ENCODE measurements at regions of chr1 and their contacts with region 1.

Region 1: GRCh38 chr1:97820470-97821188 is 100.2 kb downstream of the DPYD start:
- DNase-seq: peak; percentile 43
- H3K4me3 Mint-ChIP-seq: no peak overlapping the region
- H3K27ac Mint-ChIP-seq: no peak overlapping the region
- H3K4me1 Mint-ChIP-seq: no peaks in the 10 kb centered on the region
- H3K27me3 Mint-ChIP-seq: no peaks in the 10 kb centered on the region
- CTCF ChIP-seq: peak; percentile 45

Region 2: GRCh38 chr1:96966536-96967138 is 854.0 kb before region 1 on chr1:
- CTCF ChIA-PET with region 1: interaction called, 5 read pairs
- POLR2A ChIA-PET with region 1: no interaction called
- intact Hi-C with region 1: loop called (anchors 1 kb)
- DNase-seq: peak; percentile 70
- H3K4me3 Mint-ChIP-seq: peak overlapping the region; percentile 4
- H3K27ac Mint-ChIP-seq: no peak overlapping the region
- H3K4me1 Mint-ChIP-seq: peaks cover 6% of the 10 kb centered on the region
- H3K27me3 Mint-ChIP-seq: no peaks in the 10 kb centered on the region
- CTCF ChIP-seq: peak; percentile 90

Region 3: GRCh38 chr1:97137862-97138514 is 682.6 kb before region 1 on chr1:
- CTCF ChIA-PET with region 1: interaction called, 7 read pairs
- POLR2A ChIA-PET with region 1: no interaction called
- intact Hi-C with region 1: loop called (anchors 1 kb)
- DNase-seq: peak; percentile 67
- H3K4me3 Mint-ChIP-seq: no peak overlapping the region
- H3K27ac Mint-ChIP-seq: no peak overlapping the region
- H3K4me1 Mint-ChIP-seq: peaks cover 24% of the 10 kb centered on the region
- H3K27me3 Mint-ChIP-seq: no peaks in the 10 kb centered on the region
- CTCF ChIP-seq: peak; percentile 64

Region 4: DNA sequence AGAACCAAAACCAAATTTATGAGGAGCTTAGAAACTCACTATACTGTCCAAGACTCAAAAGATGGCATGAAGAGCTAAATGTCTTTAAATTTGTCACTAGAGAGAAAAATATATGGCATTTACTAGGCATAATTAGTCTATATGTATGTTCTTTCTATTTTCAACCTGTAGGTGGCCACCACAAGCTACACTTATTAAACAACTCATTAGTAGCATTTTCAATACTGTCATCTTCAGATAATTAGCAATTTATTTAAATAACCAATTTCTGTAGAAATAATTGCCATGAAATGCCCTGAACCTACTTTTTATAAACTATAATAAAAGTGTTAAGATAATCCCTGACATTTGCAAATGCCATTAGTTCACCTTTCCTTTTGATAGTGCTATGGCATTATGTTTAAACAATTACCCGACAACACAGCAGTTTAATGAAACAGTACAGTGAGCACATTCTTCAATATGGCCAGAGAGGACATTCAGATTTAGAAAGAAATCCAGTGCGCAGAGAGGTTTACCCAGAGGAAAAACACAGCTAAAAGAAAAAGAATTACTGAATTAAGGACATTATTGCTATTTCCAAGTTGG is 576.6 kb before region 1 on chr1:
- CTCF ChIA-PET with region 1: interaction called, 3 read pairs
- POLR2A ChIA-PET with region 1: no interaction called
- intact Hi-C with region 1: loop called (anchors 1 kb)
- DNase-seq: peak; percentile 35
- H3K4me3 Mint-ChIP-seq: no peak overlapping the region
- H3K27ac Mint-ChIP-seq: peak overlapping the region; percentile 53
- H3K4me1 Mint-ChIP-seq: peaks cover 5% of the 10 kb centered on the region
- H3K27me3 Mint-ChIP-seq: no peaks in the 10 kb centered on the region
- CTCF ChIP-seq: peak; percentile 51

Region 5: DNA sequence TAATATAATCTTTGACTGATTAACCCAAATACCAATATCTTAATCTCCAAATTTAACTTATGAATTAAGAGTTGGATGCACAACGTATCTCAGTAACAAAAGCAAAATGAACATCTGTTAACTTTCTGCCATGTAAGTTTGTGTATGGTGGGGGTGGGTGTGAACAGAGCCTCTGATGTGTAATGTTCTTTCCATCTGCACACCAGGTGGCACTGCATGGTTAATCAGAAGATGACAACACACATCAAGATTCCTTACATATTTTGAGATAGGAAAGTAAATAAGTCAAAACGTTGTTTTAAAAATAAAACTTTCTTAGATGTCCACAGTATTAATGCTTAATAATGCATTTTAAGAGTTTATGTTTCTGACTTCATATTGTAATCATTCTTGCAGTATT is 151.7 kb before region 1 on chr1:
- CTCF ChIA-PET with region 1: interaction called, 3 read pairs
- POLR2A ChIA-PET with region 1: no interaction called
- intact Hi-C with region 1: loop called (anchors 2 kb)
- DNase-seq: peak; percentile 47
- H3K4me3 Mint-ChIP-seq: no peak overlapping the region
- H3K27ac Mint-ChIP-seq: no peak overlapping the region
- H3K4me1 Mint-ChIP-seq: no peaks in the 10 kb centered on the region
- H3K27me3 Mint-ChIP-seq: no peaks in the 10 kb centered on the region
- CTCF ChIP-seq: peak; percentile 34

Region 6: GRCh38 chr1:98008373-98008772 is 187.7 kb after region 1 on chr1:
- CTCF ChIA-PET with region 1: no interaction called
- POLR2A ChIA-PET with region 1: no interaction called
- intact Hi-C with region 1: no loop called
- DNase-seq: no peak
- H3K4me3 Mint-ChIP-seq: no peak overlapping the region
- H3K27ac Mint-ChIP-seq: no peak overlapping the region
- H3K4me1 Mint-ChIP-seq: no peaks in the 10 kb centered on the region
- H3K27me3 Mint-ChIP-seq: no peaks in the 10 kb centered on the region
- CTCF ChIP-seq: no peak

Region 7: DNA sequence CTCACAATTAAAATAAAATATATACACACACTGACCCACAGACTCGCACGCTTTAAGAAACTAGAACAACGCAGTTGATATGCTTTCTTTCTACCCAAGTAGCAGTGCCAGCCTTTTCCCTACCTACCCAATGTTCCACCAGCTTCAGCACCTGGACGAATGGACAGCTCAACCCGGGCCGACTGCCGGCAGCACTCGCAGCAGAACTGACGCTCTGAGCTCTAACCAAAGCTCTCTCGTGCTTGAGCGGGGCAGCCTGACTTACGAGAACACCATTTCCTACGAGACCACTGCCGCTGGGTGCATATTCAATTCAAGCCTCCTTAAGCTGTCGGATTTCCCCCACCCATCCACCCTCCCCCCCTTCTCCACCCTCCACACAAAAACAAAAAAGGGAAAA is 227.6 kb after region 1 on chr1:
- CTCF ChIA-PET with region 1: interaction called, 4 read pairs
- POLR2A ChIA-PET with region 1: no interaction called
- intact Hi-C with region 1: loop called (anchors 5 kb)
- DNase-seq: peak; percentile 78
- H3K4me3 Mint-ChIP-seq: peak overlapping the region; percentile 51
- H3K27ac Mint-ChIP-seq: no peak overlapping the region
- H3K4me1 Mint-ChIP-seq: peaks cover 17% of the 10 kb centered on the region
- H3K27me3 Mint-ChIP-seq: no peaks in the 10 kb centered on the region
- CTCF ChIP-seq: no peak

Region 8: DNA sequence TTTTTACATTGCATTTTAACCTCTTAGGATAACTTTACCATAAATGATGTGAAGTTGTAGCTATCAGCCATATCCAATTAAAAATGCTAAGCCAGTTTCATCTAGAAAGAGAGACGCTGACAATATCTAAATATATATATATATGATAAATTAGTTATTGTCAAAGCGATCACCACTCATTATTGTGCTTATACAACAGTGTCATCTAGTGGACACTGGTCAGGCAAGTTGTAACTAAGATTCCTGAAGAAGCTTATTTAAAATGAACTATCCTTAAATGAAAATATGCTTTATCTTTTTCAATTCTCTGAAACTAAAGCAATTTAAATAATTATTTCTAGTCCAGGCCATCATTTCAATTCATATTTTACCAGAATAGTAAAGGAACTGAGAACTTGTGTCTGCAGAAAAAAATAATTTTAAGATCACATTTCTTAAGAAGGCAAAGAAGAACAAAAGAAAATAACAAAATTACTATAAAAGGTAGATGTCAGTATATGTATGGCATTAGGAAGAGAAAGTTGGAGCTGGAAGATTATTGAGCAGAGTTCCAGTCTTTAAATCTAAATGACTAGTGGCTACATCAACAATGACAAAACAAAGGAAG is 647.6 kb after region 1 on chr1:
- CTCF ChIA-PET with region 1: interaction called, 3 read pairs
- POLR2A ChIA-PET with region 1: no interaction called
- intact Hi-C with region 1: loop called (anchors 5 kb)
- DNase-seq: peak; percentile 67
- H3K4me3 Mint-ChIP-seq: no peak overlapping the region
- H3K27ac Mint-ChIP-seq: no peak overlapping the region
- H3K4me1 Mint-ChIP-seq: peaks cover 29% of the 10 kb centered on the region
- H3K27me3 Mint-ChIP-seq: no peaks in the 10 kb centered on the region
- CTCF ChIP-seq: peak; percentile 89